Activated CD4-positive, alpha-beta T cell treated with anti-CD3 and anti-CD28 coated beads, Interleukin-2, amount 10 ng/mL, durations not matched to agents 24 days and 14 days (primary cell): ENCODE measurements at regions of chr2 and their contacts with region 1.

Region 1: GRCh38 chr2:9799665-9800632 is 43.3 kb upstream of the TAF1B start:
- DNase-seq: peak; percentile 97
- H3K4me3 Mint-ChIP-seq: peak overlapping the region; percentile 65
- H3K27ac Mint-ChIP-seq: peak overlapping the region; percentile 56
- H3K4me1 Mint-ChIP-seq: peaks cover 31% of the 10 kb centered on the region
- H3K27me3 Mint-ChIP-seq: peaks cover 6% of the 10 kb centered on the region

Region 2: GRCh38 chr2:9753276-9753600 is 46.7 kb before region 1 on chr2:
- intact Hi-C with region 1: loop called (anchors 5 kb)
- DNase-seq: peak; percentile 83
- H3K4me3 Mint-ChIP-seq: peak overlapping the region; percentile 56
- H3K27ac Mint-ChIP-seq: peak overlapping the region; percentile 88
- H3K4me1 Mint-ChIP-seq: peaks cover 59% of the 10 kb centered on the region
- H3K27me3 Mint-ChIP-seq: peaks cover 32% of the 10 kb centered on the region

Region 3: DNA sequence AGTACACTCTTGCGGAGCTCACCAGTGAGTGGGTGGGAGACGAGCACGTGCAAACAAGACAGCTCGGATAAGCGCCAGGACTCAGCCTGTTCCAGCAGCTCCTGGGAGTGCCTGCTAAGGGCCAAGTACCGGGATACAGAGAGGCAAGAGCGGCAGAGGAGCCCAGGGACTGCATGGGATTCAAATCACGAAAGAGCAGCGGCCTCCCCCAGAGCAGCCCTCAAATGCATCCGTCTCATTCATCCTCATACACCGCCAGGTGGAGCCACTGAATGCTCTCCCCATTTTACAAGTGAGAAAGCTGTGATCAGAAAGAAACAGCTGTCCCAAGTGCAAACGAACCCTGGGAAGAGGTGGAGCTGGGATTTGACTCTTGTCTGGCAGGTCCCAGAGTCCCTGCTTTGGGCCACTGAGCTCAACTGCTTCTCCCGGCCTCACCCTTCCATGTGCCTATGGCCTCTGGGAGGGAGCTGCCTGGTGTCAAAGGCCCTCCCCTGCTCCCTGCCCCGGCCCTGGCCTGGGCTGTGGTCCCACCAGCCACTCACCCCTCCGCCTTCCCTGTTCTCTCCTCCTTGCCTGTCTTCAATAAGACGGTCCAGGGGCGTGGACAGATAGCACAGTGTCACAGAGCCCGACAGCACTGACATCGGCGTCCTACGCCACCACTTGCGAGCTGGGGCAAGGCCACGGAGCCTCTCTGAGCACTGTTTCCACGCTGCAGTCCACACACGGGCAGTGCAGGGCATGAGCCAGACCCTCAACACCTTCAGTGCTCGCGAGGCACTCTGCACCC is 29.4 kb before region 1 on chr2:
- intact Hi-C with region 1: loop called (anchors 1 kb)
- DNase-seq: peak; percentile 86
- H3K4me3 Mint-ChIP-seq: no peak overlapping the region
- H3K27ac Mint-ChIP-seq: no peak overlapping the region
- H3K4me1 Mint-ChIP-seq: peaks cover 20% of the 10 kb centered on the region
- H3K27me3 Mint-ChIP-seq: peaks cover 2% of the 10 kb centered on the region

Region 4: DNA sequence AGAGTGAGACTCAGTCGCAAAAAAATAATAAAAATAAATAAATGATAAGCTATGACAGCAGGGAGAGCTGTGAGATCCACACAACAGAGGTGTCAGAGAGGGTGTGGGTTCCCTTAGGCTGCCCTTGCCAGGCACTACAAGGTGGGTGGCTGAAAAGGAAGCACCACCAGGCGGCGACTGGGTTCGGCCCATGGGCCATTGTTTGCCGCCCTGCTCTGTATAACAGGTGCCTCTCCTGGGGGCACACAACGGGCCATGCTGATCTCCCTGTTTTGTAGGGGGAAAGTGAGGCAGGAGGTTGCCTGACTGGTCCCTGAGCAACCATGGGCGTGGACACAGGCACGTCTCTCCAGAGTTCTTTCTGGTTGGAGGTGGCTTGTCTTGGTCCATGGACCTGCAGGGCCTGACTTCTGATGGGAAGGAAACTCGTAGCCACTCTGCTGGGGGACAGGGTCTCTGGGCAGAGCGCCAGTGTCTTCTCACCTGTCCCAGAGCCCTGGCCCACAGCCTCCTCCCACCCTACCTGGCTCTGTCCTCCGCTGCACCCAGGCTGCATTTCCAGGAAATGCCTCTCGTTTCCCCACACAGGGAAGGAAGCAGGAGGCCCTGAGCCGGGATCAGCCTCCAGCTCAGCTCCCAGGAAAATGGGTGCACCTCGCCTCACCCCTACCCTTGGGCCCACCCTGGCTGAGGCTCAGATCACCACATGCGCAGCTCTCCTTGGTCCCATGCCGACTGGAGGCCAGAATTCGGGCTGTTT is 757.7 kb after region 1 on chr2:
- intact Hi-C with region 1: no loop called
- DNase-seq: no peak
- H3K4me3 Mint-ChIP-seq: no peak overlapping the region
- H3K27ac Mint-ChIP-seq: no peak overlapping the region
- H3K4me1 Mint-ChIP-seq: peaks cover 2% of the 10 kb centered on the region
- H3K27me3 Mint-ChIP-seq: no peaks in the 10 kb centered on the region